GM12878 (cell line): ENCODE measurements at regions of chr11 and their contacts with region 1.

Region 1: DNA sequence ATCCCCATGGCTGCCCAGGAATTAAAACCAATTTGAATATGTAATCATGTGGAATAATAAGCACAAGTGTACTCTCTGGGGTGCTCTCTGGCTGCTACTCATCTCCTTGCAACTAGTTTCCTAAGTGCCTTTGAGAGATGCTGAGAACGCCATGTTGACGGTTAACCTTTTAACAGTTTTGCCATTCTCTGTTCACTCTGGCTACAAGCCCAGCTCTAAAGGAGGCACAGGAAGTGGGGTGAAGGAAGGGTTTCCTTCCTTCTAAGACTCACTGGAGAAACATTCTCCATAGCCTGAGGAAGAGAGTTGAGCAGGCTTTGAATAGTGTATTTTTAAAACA is 122.0 kb upstream of the ZC3H12C start:
- DNase-seq: no peak
- ATAC-seq: peak; percentile 32
- H3K4me3 ChIP-seq: peak overlapping the region; percentile 8; the same call in 1 of the 2 replicates
- H3K27ac ChIP-seq: peak overlapping the region; percentile 56
- H3K4me1 ChIP-seq: peaks cover 38% of the 10 kb centered on the region
- H3K27me3 ChIP-seq: no peaks in the 10 kb centered on the region
- CTCF ChIP-seq: no peak
- EP300 ChIP-seq: no peak
- POLR2A ChIP-seq: no peak
- RAD21 ChIP-seq: no peak

Region 2: GRCh38 chr11:109984634-109985289 is 13.6 kb after region 1 on chr11:
- CTCF ChIA-PET with region 1: interaction called, 19 read pairs
- POLR2A ChIA-PET with region 1: interaction called, 64 read pairs
- RAD21 ChIA-PET with region 1: interaction called, 71 read pairs
- SMC1A ChIA-PET with region 1: interaction called, 145 read pairs
- in situ Hi-C with region 1: no loop called
- intact Hi-C with region 1: no loop called
- DNase-seq: peak; percentile 67
- ATAC-seq: peak; percentile 94
- H3K4me3 ChIP-seq: peak overlapping the region; percentile 30
- H3K27ac ChIP-seq: peak overlapping the region; percentile 89
- H3K4me1 ChIP-seq: peaks cover 19% of the 10 kb centered on the region
- H3K27me3 ChIP-seq: no peaks in the 10 kb centered on the region; a peak in 1 of 4 replicates
- CTCF ChIP-seq: no peak
- EP300 ChIP-seq: peak; percentile 94 to 95
- POLR2A ChIP-seq: no peak
- RAD21 ChIP-seq: no peak

Region 3: DNA sequence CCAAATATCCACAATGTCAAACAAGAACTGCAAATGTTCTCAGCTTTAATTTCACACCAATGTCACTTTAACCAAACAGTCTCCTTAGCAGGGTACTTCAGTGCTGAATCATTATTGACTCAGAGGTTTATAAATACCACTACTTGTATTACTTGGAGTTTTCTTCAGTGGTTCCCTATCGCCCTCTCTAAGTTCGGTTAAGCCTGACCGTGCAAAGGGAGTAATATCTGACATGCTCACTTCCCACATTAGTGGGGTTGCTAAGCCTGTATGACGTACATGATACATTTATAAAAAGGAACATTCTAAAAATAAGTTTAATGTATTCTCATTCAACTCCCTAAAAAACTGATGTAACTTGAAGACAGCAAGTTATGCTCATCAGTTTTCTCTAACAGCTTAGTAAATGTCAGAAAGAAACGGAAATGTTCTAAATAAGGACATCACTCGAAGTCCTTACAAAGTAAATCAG is 28.9 kb after region 1 on chr11:
- CTCF ChIA-PET with region 1: interaction called, 32 read pairs
- POLR2A ChIA-PET with region 1: interaction called, 28 read pairs
- RAD21 ChIA-PET with region 1: interaction called, 85 read pairs
- SMC1A ChIA-PET with region 1: interaction called, 117 read pairs
- in situ Hi-C with region 1: no loop called
- intact Hi-C with region 1: loop called (anchors 1 kb)
- DNase-seq: peak; percentile 92
- ATAC-seq: peak; percentile 96
- H3K4me3 ChIP-seq: no peak overlapping the region
- H3K27ac ChIP-seq: peak overlapping the region; percentile 62; the same call in 1 of the 2 replicates
- H3K4me1 ChIP-seq: peaks cover 19% of the 10 kb centered on the region
- H3K27me3 ChIP-seq: no peaks in the 10 kb centered on the region
- CTCF ChIP-seq: no peak
- EP300 ChIP-seq: peak; percentile 100
- POLR2A ChIP-seq: no peak
- RAD21 ChIP-seq: peak; percentile 43; the same call in 1 of the 2 replicates

Region 4: DNA sequence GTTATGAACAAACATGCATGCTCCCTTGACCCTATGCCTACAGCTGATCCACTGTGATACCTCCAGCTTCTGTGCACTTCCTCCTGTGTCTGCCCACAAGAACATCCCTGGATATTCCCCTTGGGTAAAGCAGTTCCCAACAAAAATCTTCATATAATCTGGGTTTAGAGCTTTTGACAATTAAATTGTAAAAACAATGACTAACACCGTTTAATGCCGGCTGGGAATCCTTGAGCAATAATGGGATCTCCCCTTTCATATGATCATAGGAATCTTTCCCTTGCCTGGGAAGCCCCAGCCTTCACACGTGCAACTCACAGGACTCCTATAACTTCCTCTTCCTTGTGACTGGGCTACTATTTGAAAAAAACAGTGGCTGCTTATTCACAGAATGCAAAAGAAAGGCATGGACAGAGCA is 115.7 kb after region 1 on chr11:
- CTCF ChIA-PET with region 1: interaction called, 3 read pairs
- POLR2A ChIA-PET with region 1: interaction called, 16 read pairs
- RAD21 ChIA-PET with region 1: interaction called, 40 read pairs
- SMC1A ChIA-PET with region 1: interaction called, 21 read pairs
- in situ Hi-C with region 1: no loop called
- intact Hi-C with region 1: no loop called
- DNase-seq: no peak
- ATAC-seq: 0 out of 3 replicates have a peak, but pooled peaks have one; percentile 3
- H3K4me3 ChIP-seq: no peak overlapping the region
- H3K27ac ChIP-seq: no peak overlapping the region
- H3K4me1 ChIP-seq: peaks cover 10% of the 10 kb centered on the region
- H3K27me3 ChIP-seq: no peaks in the 10 kb centered on the region
- CTCF ChIP-seq: no peak
- EP300 ChIP-seq: no peak
- POLR2A ChIP-seq: no peak
- RAD21 ChIP-seq: no peak

Region 5: GRCh38 chr11:110098645-110099044 is 127.5 kb after region 1 on chr11:
- CTCF ChIA-PET with region 1: interaction called, 3 read pairs
- POLR2A ChIA-PET with region 1: interaction called, 7 read pairs
- RAD21 ChIA-PET with region 1: interaction called, 40 read pairs
- SMC1A ChIA-PET with region 1: interaction called, 28 read pairs
- in situ Hi-C with region 1: no loop called
- intact Hi-C with region 1: no loop called
- DNase-seq: no peak
- ATAC-seq: peak; percentile 78
- H3K4me3 ChIP-seq: no peak overlapping the region
- H3K27ac ChIP-seq: no peak overlapping the region
- H3K4me1 ChIP-seq: peaks cover 11% of the 10 kb centered on the region; the same call in 1 of the 2 replicates
- H3K27me3 ChIP-seq: no peaks in the 10 kb centered on the region
- CTCF ChIP-seq: peak; percentile 23 to 41 (median 25); a peak in 3 of 6 replicates
- EP300 ChIP-seq: peak in 1 of 2 experiments; percentile 30; a peak in 1 of 4 replicates
- POLR2A ChIP-seq: no peak
- RAD21 ChIP-seq: peak; percentile 57